CD4-positive, alpha-beta T cell (primary cell): ENCODE measurements at regions of chr1 and their contacts with region 1.

Region 1: DNA sequence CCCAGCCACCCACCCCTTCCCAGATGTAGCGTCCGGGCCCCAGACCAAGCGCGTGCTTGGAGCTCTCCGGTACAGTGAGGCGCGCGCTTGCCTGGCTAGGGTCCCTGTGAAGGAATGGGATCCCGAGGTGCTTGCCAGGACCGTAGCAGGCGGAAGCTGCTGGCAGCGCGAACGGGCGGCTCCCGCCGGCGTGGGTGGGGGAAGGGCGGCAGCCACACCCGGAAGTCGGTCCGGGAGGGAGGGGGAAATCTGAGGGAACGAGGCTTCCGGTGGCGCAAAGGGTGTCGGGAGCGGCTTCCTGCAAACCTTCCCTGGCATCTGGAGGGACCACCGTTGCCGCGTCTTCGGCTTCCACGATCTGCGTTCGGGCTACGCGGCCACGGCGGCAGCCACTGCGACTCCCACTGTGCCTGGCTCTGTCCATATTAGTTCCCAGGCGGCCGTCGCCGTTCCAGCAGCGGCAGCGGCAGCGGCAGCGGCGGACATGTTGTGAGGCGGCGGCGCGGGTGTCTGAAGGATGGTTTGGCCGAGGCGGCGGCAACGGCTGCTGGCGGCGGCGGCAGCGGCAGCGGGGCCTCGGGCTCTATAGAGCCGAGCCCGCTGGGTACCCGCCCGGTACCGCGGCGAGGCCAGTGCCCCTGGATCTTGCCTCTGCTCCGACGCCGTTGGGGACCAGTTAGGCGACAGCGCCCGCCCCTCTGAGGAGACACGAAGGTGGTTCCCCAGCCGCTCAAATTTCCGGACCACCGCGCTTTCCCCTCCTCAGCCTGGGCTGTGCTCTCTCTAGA is at the start of gene DR1:
- DNase-seq: peak; percentile 85 to 94 (median 87)
- ATAC-seq: peak; percentile 79
- H3K4me3 ChIP-seq: peak within 1 kb of the TSS; percentile 90
- H3K4me3 Mint-ChIP-seq: peak within 1 kb of the TSS; percentile 99
- H3K27ac ChIP-seq: peak within 1 kb of the TSS; percentile 87 to 94
- H3K27ac Mint-ChIP-seq: peak within 1 kb of the TSS; percentile 96
- H3K4me1 ChIP-seq: peaks cover 9% of the 10 kb centered on the region
- H3K4me1 Mint-ChIP-seq: peaks cover 61% of the 10 kb centered on the region
- H3K27me3 ChIP-seq: no peaks in the 10 kb centered on the region
- H3K27me3 Mint-ChIP-seq: no peaks in the 10 kb centered on the region
- CTCF ChIP-seq: no peak
- total RNA-seq, gene DR1: 51.4 to 54.4 TPM

Region 2: GRCh38 chr1:93255222-93256079 is 90.4 kb before region 1 on chr1:
- CTCF ChIA-PET with region 1: no interaction called
- POLR2A ChIA-PET with region 1: no interaction called
- intact Hi-C with region 1: no loop called
- DNase-seq: no peak
- ATAC-seq: no peak
- H3K4me3 ChIP-seq: no peak overlapping the region
- H3K4me3 Mint-ChIP-seq: no peak overlapping the region
- H3K27ac ChIP-seq: no peak overlapping the region
- H3K27ac Mint-ChIP-seq: no peak overlapping the region
- H3K4me1 ChIP-seq: no peaks in the 10 kb centered on the region
- H3K4me1 Mint-ChIP-seq: no peaks in the 10 kb centered on the region
- H3K27me3 ChIP-seq: no peaks in the 10 kb centered on the region
- H3K27me3 Mint-ChIP-seq: no peaks in the 10 kb centered on the region
- CTCF ChIP-seq: no peak

Region 3: GRCh38 chr1:93304716-93305138 is 41.1 kb before region 1 on chr1:
- CTCF ChIA-PET with region 1: interaction called, 20 read pairs
- POLR2A ChIA-PET with region 1: interaction called, 19 read pairs
- intact Hi-C with region 1: loop called (anchors 1 to 5 kb)
- DNase-seq: peak in 12 of 14 experiments; percentile 5 to 80 (median 34)
- ATAC-seq: peak; percentile 73
- H3K4me3 ChIP-seq: no peak overlapping the region
- H3K4me3 Mint-ChIP-seq: no peak overlapping the region
- H3K27ac ChIP-seq: no peak overlapping the region
- H3K27ac Mint-ChIP-seq: no peak overlapping the region
- H3K4me1 ChIP-seq: no peaks in the 10 kb centered on the region
- H3K4me1 Mint-ChIP-seq: no peaks in the 10 kb centered on the region
- H3K27me3 ChIP-seq: no peaks in the 10 kb centered on the region
- H3K27me3 Mint-ChIP-seq: no peaks in the 10 kb centered on the region
- CTCF ChIP-seq: peak; percentile 92

Region 4: DNA sequence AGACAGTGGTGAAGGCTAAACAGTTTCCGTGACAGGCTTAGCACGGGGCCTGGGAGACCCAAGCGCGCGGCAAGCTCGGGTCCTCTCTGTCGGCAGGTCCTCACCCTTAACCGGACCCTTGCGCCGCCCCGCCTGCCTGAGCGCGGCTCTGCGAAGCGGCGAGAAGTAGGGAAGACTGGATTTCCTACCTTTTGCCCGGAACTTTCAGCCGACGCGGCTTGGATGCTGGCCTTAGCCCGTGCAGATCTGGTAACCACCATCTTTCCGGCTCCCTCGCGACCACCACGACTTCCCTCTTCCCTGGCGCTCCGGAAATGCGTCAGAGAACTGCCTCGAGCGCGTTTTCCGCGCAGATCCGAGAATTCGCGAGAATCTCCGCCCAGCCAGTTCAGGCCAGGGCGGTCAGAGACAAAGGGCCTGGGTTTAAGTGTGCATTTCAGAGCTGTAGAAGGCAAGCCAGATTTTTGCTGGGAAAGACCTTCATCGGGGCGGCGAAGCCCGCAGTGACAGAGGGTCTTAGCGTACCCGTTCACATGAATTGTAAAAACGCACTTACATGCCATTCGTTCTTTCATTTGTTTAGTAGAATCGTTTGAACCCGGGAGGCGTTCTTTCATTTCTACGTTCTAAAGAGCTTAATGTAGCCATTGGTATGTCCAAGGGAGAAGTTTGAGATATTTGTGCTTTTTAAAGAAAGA is 533.2 kb after region 1 on chr1 and contains the start of gene DNTTIP2:
- CTCF ChIA-PET with region 1: no interaction called
- POLR2A ChIA-PET with region 1: interaction called, 16 read pairs
- intact Hi-C with region 1: no loop called
- DNase-seq: peak; percentile 78 to 93 (median 82)
- ATAC-seq: peak; percentile 82
- H3K4me3 ChIP-seq: peak within 1 kb of the TSS; percentile 91
- H3K4me3 Mint-ChIP-seq: peak within 1 kb of the TSS; percentile 100
- H3K27ac ChIP-seq: peak within 1 kb of the TSS; percentile 85 to 94
- H3K27ac Mint-ChIP-seq: peak within 1 kb of the TSS; percentile 98
- H3K4me1 ChIP-seq: peaks cover 26% of the 10 kb centered on the region
- H3K4me1 Mint-ChIP-seq: peaks cover 45% of the 10 kb centered on the region
- H3K27me3 ChIP-seq: no peaks in the 10 kb centered on the region
- H3K27me3 Mint-ChIP-seq: no peaks in the 10 kb centered on the region
- CTCF ChIP-seq: no peak
- total RNA-seq, gene DNTTIP2: 110 to 120 TPM

Region 5: DNA sequence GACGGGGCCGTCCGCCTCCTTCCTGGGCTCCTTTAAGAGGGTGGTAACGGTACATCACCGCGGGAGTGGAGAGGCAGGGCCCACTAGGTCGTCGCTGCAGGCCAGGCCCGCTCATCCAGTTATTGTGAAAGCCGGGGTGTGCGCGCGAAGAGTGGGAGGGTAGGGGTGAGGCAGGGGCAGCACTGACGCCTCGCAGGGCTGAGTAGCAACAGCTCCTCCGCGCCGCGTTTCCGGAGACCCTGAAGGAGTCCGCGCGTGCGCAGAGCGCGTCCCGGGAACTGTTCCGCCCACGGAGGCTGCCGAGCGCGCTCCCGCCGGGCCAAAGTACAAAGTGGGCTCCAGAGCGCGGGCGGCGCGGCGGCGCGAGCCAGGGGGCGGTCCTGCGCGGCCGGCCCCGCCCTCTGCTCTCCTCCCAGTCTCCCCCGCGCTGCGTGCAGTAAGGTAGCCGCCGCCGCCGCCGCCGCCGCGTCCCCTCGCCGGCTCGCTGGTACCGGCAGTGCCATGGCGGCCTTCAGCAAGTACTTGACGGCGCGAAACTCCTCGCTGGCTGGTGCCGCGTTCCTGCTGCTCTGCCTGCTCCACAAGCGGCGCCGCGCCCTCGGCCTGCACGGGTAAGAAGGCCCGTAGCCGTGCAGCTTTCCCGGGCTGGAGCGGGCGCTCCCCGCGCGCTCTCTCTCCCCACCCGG is 1072.3 kb after region 1 on chr1 and contains the start of gene ABCD3:
- CTCF ChIA-PET with region 1: no interaction called
- POLR2A ChIA-PET with region 1: no interaction called
- intact Hi-C with region 1: loop called in 1 of 2 experiments (anchors 10 kb)
- DNase-seq: peak; percentile 92 to 99 (median 97)
- ATAC-seq: peak; percentile 87
- H3K4me3 ChIP-seq: peak within 1 kb of the TSS; percentile 82
- H3K4me3 Mint-ChIP-seq: no peak within 1 kb of the TSS
- H3K27ac ChIP-seq: peak within 1 kb of the TSS; percentile 61 to 77
- H3K27ac Mint-ChIP-seq: no peak within 1 kb of the TSS
- H3K4me1 ChIP-seq: peaks cover 14% of the 10 kb centered on the region
- H3K4me1 Mint-ChIP-seq: peaks cover 41% of the 10 kb centered on the region
- H3K27me3 ChIP-seq: no peaks in the 10 kb centered on the region
- H3K27me3 Mint-ChIP-seq: no peaks in the 10 kb centered on the region
- CTCF ChIP-seq: no peak
- total RNA-seq, gene ABCD3: 13.0 to 13.5 TPM